ENCODE measurements at regions of chr7 and their contacts with region 1.

Region 1: DNA sequence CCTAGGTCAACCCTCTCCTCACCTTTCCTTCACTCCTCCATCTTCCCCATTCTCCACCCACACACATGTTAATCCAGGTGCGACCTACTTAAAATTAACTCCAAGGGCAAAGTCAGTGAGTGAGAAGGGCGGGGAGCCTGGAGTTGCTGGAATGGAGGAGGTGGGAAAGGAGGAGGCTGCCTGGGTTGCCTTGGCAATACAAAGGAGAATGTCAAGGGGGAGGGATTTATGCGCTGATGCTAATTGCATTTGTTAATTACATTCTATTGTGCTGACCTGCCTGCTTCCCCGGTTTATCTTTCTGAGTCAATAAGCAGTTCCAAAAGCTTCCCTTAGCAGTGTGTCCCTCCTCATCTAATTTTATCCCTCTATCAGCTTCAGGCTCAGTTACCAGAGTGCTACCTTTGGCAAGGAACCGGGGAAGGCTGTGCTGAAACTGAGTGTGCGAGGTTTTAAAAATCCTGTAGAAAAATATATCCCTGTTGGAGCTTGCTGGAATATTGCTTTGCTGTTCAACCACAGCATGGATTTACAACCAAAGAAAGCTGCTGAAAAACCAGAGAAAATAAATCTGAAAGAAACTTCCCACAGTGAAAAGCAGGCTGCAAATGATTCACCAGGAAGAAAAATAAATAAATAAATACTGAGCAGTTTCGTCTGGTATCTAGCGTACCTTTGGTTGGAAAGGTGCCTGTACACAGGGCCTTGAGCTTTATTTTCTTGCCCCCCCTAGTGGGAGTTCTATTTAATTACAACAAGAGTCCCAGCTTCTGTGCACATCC is 113.2 kb upstream of the DGKB start:
- DNase-seq: peak; percentile 53 to 72
- H3K4me3 ChIP-seq: no peak overlapping the region
- H3K27ac ChIP-seq: no peak overlapping the region
- H3K4me1 ChIP-seq: no peaks in the 10 kb centered on the region; the same call in 1 of the 2 replicates
- H3K27me3 ChIP-seq: no peaks in the 10 kb centered on the region
- CTCF ChIP-seq: peak; percentile 89

Region 2: GRCh38 chr7:13279854-13280435 is 1735.8 kb before region 1 on chr7:
- CTCF ChIA-PET with region 1: no interaction called
- POLR2A ChIA-PET with region 1: no interaction called
- intact Hi-C with region 1: loop called (anchors 5 kb)
- DNase-seq: no peak
- H3K4me3 ChIP-seq: no peak overlapping the region
- H3K27ac ChIP-seq: no peak overlapping the region
- H3K4me1 ChIP-seq: no peaks in the 10 kb centered on the region
- H3K27me3 ChIP-seq: no peaks in the 10 kb centered on the region
- CTCF ChIP-seq: peak; percentile 80

Region 3: GRCh38 chr7:14717816-14718215 is 297.9 kb before region 1 on chr7:
- CTCF ChIA-PET with region 1: interaction called, 10 read pairs
- POLR2A ChIA-PET with region 1: no interaction called
- intact Hi-C with region 1: loop called (anchors 1 kb)
- DNase-seq: no peak
- H3K4me3 ChIP-seq: no peak overlapping the region
- H3K27ac ChIP-seq: no peak overlapping the region
- H3K4me1 ChIP-seq: no peaks in the 10 kb centered on the region
- H3K27me3 ChIP-seq: no peaks in the 10 kb centered on the region
- CTCF ChIP-seq: peak; percentile 77

Region 4: DNA sequence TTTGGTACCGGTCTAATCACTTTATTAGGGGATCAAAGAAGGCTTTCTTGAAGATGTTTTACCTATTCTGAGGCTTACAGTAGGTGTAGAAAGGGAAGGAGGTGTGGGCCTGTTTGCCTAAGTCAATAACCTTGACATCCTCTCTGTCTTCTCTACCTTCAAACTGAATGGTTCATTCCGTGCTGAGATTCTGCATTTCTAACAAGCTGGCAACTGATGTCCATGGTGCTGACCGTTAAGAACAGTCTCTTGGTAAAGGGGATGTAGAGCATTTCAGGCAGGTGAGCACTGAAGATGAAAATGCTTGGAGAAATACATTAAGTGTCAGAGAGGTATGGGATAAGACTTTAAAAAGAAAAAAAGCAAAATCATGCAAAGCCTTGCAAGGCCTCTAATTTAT is 61.7 kb before region 1 on chr7:
- CTCF ChIA-PET with region 1: no interaction called
- POLR2A ChIA-PET with region 1: no interaction called
- intact Hi-C with region 1: no loop called
- DNase-seq: no peak
- H3K4me3 ChIP-seq: no peak overlapping the region
- H3K27ac ChIP-seq: no peak overlapping the region
- H3K4me1 ChIP-seq: no peaks in the 10 kb centered on the region
- H3K27me3 ChIP-seq: no peaks in the 10 kb centered on the region
- CTCF ChIP-seq: no peak

Region 5: GRCh38 chr7:14988941-14989340 is 26.8 kb before region 1 on chr7:
- CTCF ChIA-PET with region 1: no interaction called
- POLR2A ChIA-PET with region 1: no interaction called
- intact Hi-C with region 1: no loop called
- DNase-seq: no peak
- H3K4me3 ChIP-seq: no peak overlapping the region
- H3K27ac ChIP-seq: no peak overlapping the region
- H3K4me1 ChIP-seq: no peaks in the 10 kb centered on the region
- H3K27me3 ChIP-seq: no peaks in the 10 kb centered on the region
- CTCF ChIP-seq: no peak

Region 6: GRCh38 chr7:15199482-15199881 is 183.7 kb after region 1 on chr7:
- CTCF ChIA-PET with region 1: interaction called, 18 read pairs
- POLR2A ChIA-PET with region 1: no interaction called
- intact Hi-C with region 1: loop called (anchors 2 kb)
- DNase-seq: no peak
- H3K4me3 ChIP-seq: no peak overlapping the region
- H3K27ac ChIP-seq: no peak overlapping the region
- H3K4me1 ChIP-seq: no peaks in the 10 kb centered on the region
- H3K27me3 ChIP-seq: no peaks in the 10 kb centered on the region
- CTCF ChIP-seq: peak; percentile 61

Region 7: GRCh38 chr7:15314922-15315321 is 299.2 kb after region 1 on chr7:
- CTCF ChIA-PET with region 1: no interaction called
- POLR2A ChIA-PET with region 1: no interaction called
- intact Hi-C with region 1: no loop called
- DNase-seq: no peak
- H3K4me3 ChIP-seq: no peak overlapping the region
- H3K27ac ChIP-seq: no peak overlapping the region
- H3K4me1 ChIP-seq: no peaks in the 10 kb centered on the region
- H3K27me3 ChIP-seq: no peaks in the 10 kb centered on the region
- CTCF ChIP-seq: no peak

Region 8: GRCh38 chr7:15396210-15397158 is 380.7 kb after region 1 on chr7:
- CTCF ChIA-PET with region 1: interaction called, 18 read pairs
- POLR2A ChIA-PET with region 1: no interaction called
- intact Hi-C with region 1: no loop called
- DNase-seq: peak in 1 of 2 experiments; percentile 7
- H3K4me3 ChIP-seq: no peak overlapping the region; the same call in 1 of the 2 replicates
- H3K27ac ChIP-seq: no peak overlapping the region
- H3K4me1 ChIP-seq: no peaks in the 10 kb centered on the region
- H3K27me3 ChIP-seq: no peaks in the 10 kb centered on the region
- CTCF ChIP-seq: no peak

Measured in PC-9 (cell line).